ENCODE measurements at regions of chr9 and their contacts with region 1.

Region 1: GRCh38 chr9:72022841-72023240 is 37.6 kb downstream of the C9orf57 start:
- DNase-seq: no peak
- H3K4me3 Mint-ChIP-seq: no peak overlapping the region
- H3K27ac Mint-ChIP-seq: no peak overlapping the region
- H3K4me1 Mint-ChIP-seq: peaks cover 5% of the 10 kb centered on the region
- H3K27me3 Mint-ChIP-seq: no peaks in the 10 kb centered on the region

Region 2: DNA sequence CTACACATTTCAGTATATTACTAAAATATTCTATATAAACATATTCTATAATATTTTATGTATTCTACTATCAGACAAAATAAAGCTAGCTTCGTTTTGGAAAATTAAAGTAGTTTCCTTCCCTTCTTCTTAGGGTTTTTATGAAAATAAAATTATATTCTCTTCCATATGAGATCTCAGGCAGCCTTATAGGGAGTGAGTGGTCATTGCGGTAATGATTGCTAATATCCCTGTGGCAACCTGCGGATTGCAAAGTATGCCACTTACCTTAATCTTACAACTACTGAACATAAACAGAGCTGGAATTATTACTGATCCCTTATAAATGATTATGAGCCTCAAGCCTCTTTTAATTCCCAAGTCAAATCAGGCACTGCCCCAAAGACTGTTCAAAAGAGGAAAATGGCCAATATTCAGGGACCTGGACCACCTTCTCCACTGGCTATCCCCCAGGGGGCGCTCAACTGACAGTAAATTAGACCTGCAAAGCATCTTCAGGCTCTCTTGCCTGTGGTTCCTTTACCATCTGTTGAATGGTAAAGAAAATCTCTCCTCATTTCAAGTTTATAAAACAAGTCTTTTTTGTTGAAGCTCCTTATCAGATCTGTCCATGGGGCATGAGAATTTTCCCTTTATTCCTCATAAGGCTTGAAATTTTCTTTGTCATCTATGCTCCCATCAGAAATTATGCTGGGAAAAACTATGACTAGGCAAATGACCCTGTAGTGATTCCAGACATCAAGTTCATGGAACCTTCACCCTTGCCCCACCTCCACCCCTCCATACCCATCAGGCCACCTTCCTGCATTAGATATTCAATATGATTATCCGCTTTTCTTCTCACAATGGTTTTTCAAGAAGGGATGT is 418.4 kb before region 1 on chr9:
- CTCF ChIA-PET with region 1: interaction called, 13 read pairs
- DNase-seq: peak; percentile 87
- H3K4me3 Mint-ChIP-seq: no peak overlapping the region
- H3K27ac Mint-ChIP-seq: no peak overlapping the region
- H3K4me1 Mint-ChIP-seq: no peaks in the 10 kb centered on the region
- H3K27me3 Mint-ChIP-seq: peaks cover 6% of the 10 kb centered on the region

Region 3: GRCh38 chr9:71783120-71783530 is 239.7 kb before region 1 on chr9:
- CTCF ChIA-PET with region 1: interaction called, 10 read pairs
- DNase-seq: peak; percentile 91
- H3K4me3 Mint-ChIP-seq: peak overlapping the region; percentile 54
- H3K27ac Mint-ChIP-seq: peak overlapping the region; percentile 99
- H3K4me1 Mint-ChIP-seq: peaks cover 48% of the 10 kb centered on the region
- H3K27me3 Mint-ChIP-seq: no peaks in the 10 kb centered on the region

Region 4: GRCh38 chr9:71806901-71807307 is 215.9 kb before region 1 on chr9:
- CTCF ChIA-PET with region 1: interaction called, 109 read pairs
- DNase-seq: peak; percentile 74
- H3K4me3 Mint-ChIP-seq: no peak overlapping the region
- H3K27ac Mint-ChIP-seq: no peak overlapping the region
- H3K4me1 Mint-ChIP-seq: peaks cover 6% of the 10 kb centered on the region
- H3K27me3 Mint-ChIP-seq: peaks cover 5% of the 10 kb centered on the region

Region 5: DNA sequence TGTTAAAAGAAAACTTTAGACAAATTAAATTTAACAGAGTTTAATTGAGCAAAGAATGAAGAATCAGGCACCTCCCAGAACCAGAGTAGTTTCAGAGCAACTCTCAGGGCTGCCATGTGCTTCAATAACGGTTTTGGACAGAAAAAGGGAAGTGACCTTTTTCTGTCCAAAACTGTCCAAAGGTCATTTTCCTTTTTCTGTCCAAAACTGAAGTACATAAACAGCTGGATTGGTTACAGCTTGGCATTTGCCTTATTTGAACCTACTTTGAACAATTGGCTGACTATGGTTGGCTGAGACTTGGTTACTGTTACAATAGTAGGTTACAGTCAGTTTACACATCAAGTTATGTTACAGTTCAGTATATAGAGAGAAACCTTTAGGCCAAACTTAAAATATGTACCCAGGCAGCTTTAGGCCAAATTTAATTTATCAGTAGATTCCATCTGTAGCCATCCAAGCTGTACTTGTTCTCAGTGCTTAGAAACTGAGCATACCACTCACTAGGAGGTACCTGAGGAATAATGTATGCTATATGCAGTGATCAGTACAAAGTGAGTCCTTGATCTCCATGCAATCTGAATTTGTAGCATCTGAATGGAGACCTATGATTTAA is 67.4 kb before region 1 on chr9:
- CTCF ChIA-PET with region 1: no interaction called
- DNase-seq: no peak
- H3K4me3 Mint-ChIP-seq: no peak overlapping the region
- H3K27ac Mint-ChIP-seq: no peak overlapping the region
- H3K4me1 Mint-ChIP-seq: no peaks in the 10 kb centered on the region
- H3K27me3 Mint-ChIP-seq: no peaks in the 10 kb centered on the region

Region 6: DNA sequence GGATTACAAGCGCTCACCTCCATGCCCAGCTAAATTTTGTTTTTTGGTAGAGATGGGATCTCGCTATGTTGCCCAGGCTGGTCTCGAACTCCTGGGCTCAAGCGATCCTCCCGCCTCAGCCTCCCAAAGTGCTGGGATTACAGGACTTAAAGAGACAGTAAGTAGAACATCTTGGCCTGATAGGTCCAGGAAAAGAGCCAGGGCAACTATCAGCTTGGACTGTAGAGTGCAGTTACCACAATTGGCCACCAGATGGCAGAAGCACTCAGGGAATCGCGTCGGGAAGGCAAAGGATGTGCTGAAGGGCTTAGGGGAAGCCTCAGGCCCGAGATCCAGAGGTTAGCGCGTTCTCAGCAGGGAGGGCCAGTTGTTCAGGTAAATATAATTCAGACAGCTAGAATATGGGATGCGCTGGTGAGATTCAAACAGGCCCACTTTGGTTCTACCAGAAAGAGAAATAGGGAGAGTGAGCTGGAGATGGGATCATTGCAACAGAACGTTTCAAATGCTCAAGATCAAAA is 16.1 kb after region 1 on chr9:
- CTCF ChIA-PET with region 1: interaction called, 59 read pairs
- DNase-seq: peak; percentile 72
- H3K4me3 Mint-ChIP-seq: no peak overlapping the region
- H3K27ac Mint-ChIP-seq: no peak overlapping the region
- H3K4me1 Mint-ChIP-seq: peaks cover 3% of the 10 kb centered on the region
- H3K27me3 Mint-ChIP-seq: peaks cover 28% of the 10 kb centered on the region